ENCODE measurements at regions of chr11 and their contacts with region 1.

Region 1: DNA sequence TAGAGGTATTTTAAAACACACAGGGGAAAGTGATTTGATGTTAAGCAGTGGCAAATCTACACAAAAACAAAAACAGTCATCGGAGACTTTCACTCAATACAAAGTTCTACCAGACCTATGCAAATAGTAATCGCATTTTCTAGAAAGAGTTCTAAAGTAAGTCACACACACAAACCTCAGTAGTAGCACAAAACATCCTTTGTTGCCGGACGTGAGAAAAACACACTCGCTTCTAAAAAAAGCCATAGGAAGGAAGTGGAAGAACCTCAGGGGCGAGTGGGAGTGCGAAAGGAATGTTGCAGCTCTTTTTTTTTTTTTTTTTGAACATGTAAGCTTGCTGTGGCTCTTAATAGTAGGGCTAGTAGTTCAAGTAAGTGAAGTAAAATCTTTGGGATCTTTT is 88.9 kb downstream of the MAML2 start:
- DNase-seq: peak in 1 of 2 donors; percentile 63
- ATAC-seq: peak; percentile 24 to 49 (median 34)
- H3K4me3 ChIP-seq: peak overlapping the region; percentile 3
- H3K4me3 Mint-ChIP-seq: peak overlapping the region; percentile 91
- H3K27ac ChIP-seq: peak overlapping the region; percentile 48
- H3K27ac Mint-ChIP-seq: peak overlapping the region; percentile 93 to 98
- H3K4me1 ChIP-seq: peaks cover 28% of the 10 kb centered on the region
- H3K4me1 Mint-ChIP-seq: peaks cover 70 to 76% of the 10 kb centered on the region in 2 donors
- H3K27me3 ChIP-seq: no peaks in the 10 kb centered on the region
- H3K27me3 Mint-ChIP-seq: no peaks in the 10 kb centered on the region
- CTCF ChIP-seq: no peak

Region 2: DNA sequence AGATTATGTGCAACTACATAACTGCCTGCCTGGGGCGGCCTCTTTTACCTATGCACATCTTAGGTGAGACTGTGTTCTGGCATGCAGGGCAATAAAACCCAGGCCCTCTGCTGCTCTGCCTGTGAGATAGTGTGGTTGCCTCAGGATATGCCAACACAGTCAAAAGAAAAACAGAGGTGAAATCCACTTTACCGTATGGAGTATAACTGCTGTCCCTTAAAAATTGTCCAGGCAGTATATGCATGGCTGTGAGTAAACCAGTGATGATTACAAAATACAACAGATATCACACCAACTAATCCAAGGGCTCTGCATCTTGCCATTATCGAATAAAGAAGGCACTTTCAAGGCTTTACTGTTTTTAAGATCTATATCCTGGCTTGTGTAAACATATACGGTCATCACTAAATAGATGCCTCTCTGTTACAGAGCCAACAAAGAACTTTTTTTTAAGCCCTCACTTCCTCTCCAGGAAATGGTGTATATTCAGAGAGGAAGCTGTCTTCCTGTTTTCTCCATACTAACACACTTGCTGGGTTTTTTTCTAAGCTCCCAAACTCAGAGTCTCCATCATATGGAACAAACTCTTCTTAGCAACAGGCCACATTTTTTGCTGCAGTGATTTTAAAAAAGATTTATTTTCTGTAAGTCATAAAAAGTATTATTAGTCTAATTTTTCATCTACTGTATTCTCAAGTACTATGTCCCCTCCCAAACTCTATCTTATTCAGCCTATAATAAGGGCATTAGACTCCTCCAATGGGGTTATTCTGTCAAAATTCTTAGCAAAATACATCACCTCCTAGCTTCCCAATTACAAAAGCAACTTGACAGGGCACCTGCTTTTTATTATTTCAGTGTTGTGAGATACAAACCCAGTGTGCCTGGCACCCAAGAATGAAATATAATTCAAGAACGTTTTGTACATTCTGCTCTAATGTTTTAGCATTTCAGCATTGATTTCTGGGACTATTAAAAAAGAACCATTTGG is 46.3 kb before region 1 on chr11:
- intact Hi-C with region 1: loop called (anchors 2 kb)
- DNase-seq: peak in 1 of 2 donors; percentile 66
- ATAC-seq: peak; percentile 19 to 45 (median 36)
- H3K4me3 ChIP-seq: no peak overlapping the region
- H3K4me3 Mint-ChIP-seq: peak overlapping the region; percentile 77
- H3K27ac ChIP-seq: peak overlapping the region; percentile 61
- H3K27ac Mint-ChIP-seq: peak overlapping the region; percentile 79 to 89
- H3K4me1 ChIP-seq: peaks cover 32% of the 10 kb centered on the region
- H3K4me1 Mint-ChIP-seq: peaks cover 62% of the 10 kb centered on the region in 2 donors
- H3K27me3 ChIP-seq: no peaks in the 10 kb centered on the region
- H3K27me3 Mint-ChIP-seq: no peaks in the 10 kb centered on the region
- CTCF ChIP-seq: no peak

Region 3: DNA sequence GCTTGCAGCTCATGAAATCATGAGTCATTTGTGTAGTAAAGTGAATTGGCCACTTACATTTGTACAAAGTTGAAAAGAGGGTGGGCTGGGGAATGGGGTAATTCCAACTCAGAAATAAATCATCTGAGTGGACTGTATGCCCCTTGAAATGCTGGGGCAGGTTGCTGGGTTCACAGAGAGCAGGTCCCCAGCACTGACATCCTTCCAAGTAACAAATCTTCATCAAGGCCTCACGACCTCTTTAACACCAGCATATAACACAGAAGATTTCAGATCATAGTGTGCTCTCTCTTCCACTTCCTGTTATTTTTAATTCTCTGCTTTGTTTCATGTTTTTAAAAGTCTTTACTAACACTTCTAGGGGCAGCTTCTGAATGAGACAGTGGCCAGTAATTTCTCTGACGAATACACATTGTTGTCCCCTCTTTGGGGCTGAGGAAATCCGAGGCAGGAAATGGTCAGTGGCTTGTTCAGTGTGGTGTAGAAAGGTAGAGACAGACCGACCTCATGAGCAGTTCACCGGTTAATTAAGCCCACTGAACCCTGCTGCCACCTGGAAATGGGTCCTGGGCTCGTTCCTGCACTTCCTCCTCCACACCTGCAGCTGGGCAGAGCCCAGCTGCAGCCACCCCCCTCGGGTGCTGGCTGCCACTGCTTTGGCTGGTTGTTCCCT is 38.8 kb before region 1 on chr11:
- intact Hi-C with region 1: loop called (anchors 5 kb)
- DNase-seq: peak; percentile 30 to 62
- ATAC-seq: peak; percentile 77 to 90 (median 80)
- H3K4me3 ChIP-seq: no peak overlapping the region
- H3K4me3 Mint-ChIP-seq: peak overlapping the region; percentile 65
- H3K27ac ChIP-seq: peak overlapping the region; percentile 83
- H3K27ac Mint-ChIP-seq: peak overlapping the region; percentile 89 to 90
- H3K4me1 ChIP-seq: peaks cover 39% of the 10 kb centered on the region
- H3K4me1 Mint-ChIP-seq: peaks cover 52 to 57% of the 10 kb centered on the region in 2 donors
- H3K27me3 ChIP-seq: no peaks in the 10 kb centered on the region
- H3K27me3 Mint-ChIP-seq: no peaks in the 10 kb centered on the region
- CTCF ChIP-seq: no peak

Region 4: DNA sequence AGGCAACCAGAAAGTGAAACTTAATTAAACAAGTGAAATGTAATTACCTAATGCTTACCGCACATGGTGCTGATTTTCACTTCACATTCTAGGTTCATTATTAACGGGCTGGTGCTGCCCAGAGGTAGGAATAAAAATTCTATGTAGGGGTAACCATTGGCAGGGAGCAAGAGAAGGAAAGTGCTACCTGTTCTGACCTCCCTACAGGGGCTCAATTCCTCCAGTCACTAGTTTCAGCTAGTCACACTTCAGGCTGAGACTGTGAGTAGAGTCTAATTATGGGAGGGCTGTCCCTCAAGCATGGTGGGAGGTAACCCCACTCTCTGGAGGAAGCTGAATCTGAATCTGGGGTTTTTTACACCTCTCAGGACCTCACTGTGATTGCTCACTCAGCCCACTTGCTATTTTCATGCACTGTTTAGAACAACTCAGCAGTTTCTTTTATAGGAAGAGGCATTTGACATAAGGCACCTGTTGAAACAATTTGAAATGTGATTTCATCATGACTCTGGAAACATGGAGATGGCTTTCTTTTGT is 13.5 kb after region 1 on chr11:
- intact Hi-C with region 1: loop called (anchors 1 kb)
- DNase-seq: peak; percentile 30 to 66
- ATAC-seq: peak; percentile 90 to 96 (median 95)
- H3K4me3 ChIP-seq: peak overlapping the region; percentile 5
- H3K4me3 Mint-ChIP-seq: peak overlapping the region; percentile 45
- H3K27ac ChIP-seq: peak overlapping the region; percentile 79
- H3K27ac Mint-ChIP-seq: peak overlapping the region; percentile 81 to 89
- H3K4me1 ChIP-seq: peaks cover 18% of the 10 kb centered on the region
- H3K4me1 Mint-ChIP-seq: peaks cover 56 to 63% of the 10 kb centered on the region in 2 donors
- H3K27me3 ChIP-seq: no peaks in the 10 kb centered on the region
- H3K27me3 Mint-ChIP-seq: no peaks in the 10 kb centered on the region
- CTCF ChIP-seq: no peak

Region 5: GRCh38 chr11:96389720-96390487 is 135.8 kb after region 1 on chr11 and contains the starts of genes CCDC82 and JRKL:
- intact Hi-C with region 1: loop called (anchors 5 kb)
- DNase-seq: peak; percentile 97
- ATAC-seq: peak; percentile 96 to 99 (median 97)
- H3K4me3 ChIP-seq: peak within 1 kb of the TSS; percentile 82
- H3K4me3 Mint-ChIP-seq: peak within 1 kb of the TSS; percentile 95
- H3K27ac ChIP-seq: peak within 1 kb of the TSS; percentile 89
- H3K27ac Mint-ChIP-seq: peak within 1 kb of the TSS; percentile 75 to 95
- H3K4me1 ChIP-seq: peaks cover 8% of the 10 kb centered on the region
- H3K4me1 Mint-ChIP-seq: peaks cover 35 to 54% of the 10 kb centered on the region in 2 donors
- H3K27me3 ChIP-seq: no peaks in the 10 kb centered on the region
- H3K27me3 Mint-ChIP-seq: no peaks in the 10 kb centered on the region
- CTCF ChIP-seq: no peak
- total RNA-seq, gene CCDC82: 36.2 to 42.1 (median 38.0) TPM
- total RNA-seq, gene JRKL: 4.5 to 6.1 (median 5.5) TPM

Region 6: GRCh38 chr11:96554236-96554820 is 300.2 kb after region 1 on chr11:
- intact Hi-C with region 1: loop called (anchors 10 kb)
- DNase-seq: no peak
- ATAC-seq: no peak
- H3K4me3 ChIP-seq: no peak overlapping the region
- H3K4me3 Mint-ChIP-seq: no peak overlapping the region
- H3K27ac ChIP-seq: no peak overlapping the region
- H3K27ac Mint-ChIP-seq: no peak overlapping the region
- H3K4me1 ChIP-seq: no peaks in the 10 kb centered on the region
- H3K4me1 Mint-ChIP-seq: no peaks in the 10 kb centered on the region
- H3K27me3 ChIP-seq: no peaks in the 10 kb centered on the region
- H3K27me3 Mint-ChIP-seq: no peaks in the 10 kb centered on the region
- CTCF ChIP-seq: no peak